ENCODE measurements at regions of chr5 and their contacts with region 1.

Region 1: DNA sequence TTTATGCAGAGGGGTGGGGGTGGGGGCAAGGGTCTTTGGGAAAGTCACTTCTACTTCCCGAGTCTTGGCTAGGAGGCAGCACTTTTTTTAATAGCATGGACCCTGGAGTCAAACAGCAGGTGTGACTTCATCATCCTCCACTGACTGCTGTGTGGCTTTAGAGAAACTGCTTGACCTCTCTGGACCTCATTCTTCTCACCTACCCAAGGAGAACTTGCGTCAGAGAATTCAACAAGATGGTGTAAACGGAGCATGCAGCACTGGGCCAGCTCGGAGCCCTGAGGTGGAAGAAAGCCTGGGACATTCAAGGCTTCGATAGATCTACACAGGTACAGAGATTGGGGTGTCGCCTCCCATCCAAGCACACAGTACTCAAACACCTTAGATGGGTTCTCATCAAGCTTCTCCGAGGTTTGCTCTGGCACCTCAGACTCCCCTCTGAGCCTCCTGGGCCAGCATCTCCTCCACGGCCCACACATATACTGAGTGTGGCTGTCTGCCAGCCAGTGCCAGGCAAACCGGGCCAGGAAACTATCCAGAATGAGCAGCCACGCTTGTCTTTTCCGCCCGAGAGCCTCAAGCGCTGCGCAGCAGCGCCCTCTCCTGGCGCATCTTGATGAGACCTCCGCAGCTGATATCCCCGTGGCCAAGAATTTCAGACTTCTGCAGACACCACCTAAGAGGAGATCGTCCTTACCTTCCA is 4.6 kb upstream of the SLC25A48 start:
- DNase-seq: peak; percentile 56 to 79
- ATAC-seq: peak; percentile 28 to 64; a peak in 4 of 6 replicates
- H3K4me3 ChIP-seq: no peak overlapping the region
- H3K27ac ChIP-seq: no peak overlapping the region
- H3K4me1 ChIP-seq: 0 out of 3 replicates have a peak, but pooled peaks cover under 1% of the 10 kb centered on the region
- CTCF ChIP-seq: peak; percentile 86
- EP300 ChIP-seq: no peak
- POLR2A ChIP-seq: no peak
- RAD21 ChIP-seq: peak; percentile 83

Region 2: DNA sequence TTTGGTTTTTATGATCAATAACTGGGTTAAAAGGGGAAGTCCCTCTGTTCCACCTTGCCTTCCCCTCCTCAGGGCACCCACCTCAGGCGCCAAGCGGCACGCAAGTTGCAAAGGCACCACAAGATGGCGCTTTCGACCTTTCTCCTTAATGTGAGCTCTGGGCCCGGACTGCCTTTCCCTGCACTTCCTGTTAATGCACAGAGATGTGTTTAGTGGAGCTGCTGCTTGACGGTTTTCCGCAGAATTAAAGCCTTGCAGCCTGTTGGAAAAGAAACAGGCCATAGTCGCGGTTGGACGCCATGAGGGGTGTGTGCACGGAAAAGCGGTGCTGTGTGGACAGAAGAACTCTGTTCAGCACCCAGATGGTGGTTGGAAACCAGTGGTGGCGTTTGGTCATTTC is 269.0 kb before region 1 on chr5:
- CTCF ChIA-PET with region 1: interaction called, 153 read pairs
- POLR2A ChIA-PET with region 1: no interaction called
- DNase-seq: peak; percentile 76 to 86
- ATAC-seq: peak; percentile 93 to 98
- H3K4me3 ChIP-seq: no peak overlapping the region
- H3K27ac ChIP-seq: no peak overlapping the region
- H3K4me1 ChIP-seq: no peaks in the 10 kb centered on the region
- CTCF ChIP-seq: peak; percentile 84
- EP300 ChIP-seq: no peak
- POLR2A ChIP-seq: no peak
- RAD21 ChIP-seq: peak; percentile 80 to 82

Region 3: GRCh38 chr5:135574493-135574892 is 255.3 kb before region 1 on chr5:
- CTCF ChIA-PET with region 1: interaction called, 11 read pairs
- POLR2A ChIA-PET with region 1: no interaction called
- DNase-seq: no peak
- ATAC-seq: no peak
- H3K4me3 ChIP-seq: no peak overlapping the region
- H3K27ac ChIP-seq: no peak overlapping the region
- H3K4me1 ChIP-seq: 0 out of 3 replicates have a peak, but pooled peaks cover 4% of the 10 kb centered on the region
- CTCF ChIP-seq: no peak
- EP300 ChIP-seq: no peak
- POLR2A ChIP-seq: no peak
- RAD21 ChIP-seq: no peak

Region 4: DNA sequence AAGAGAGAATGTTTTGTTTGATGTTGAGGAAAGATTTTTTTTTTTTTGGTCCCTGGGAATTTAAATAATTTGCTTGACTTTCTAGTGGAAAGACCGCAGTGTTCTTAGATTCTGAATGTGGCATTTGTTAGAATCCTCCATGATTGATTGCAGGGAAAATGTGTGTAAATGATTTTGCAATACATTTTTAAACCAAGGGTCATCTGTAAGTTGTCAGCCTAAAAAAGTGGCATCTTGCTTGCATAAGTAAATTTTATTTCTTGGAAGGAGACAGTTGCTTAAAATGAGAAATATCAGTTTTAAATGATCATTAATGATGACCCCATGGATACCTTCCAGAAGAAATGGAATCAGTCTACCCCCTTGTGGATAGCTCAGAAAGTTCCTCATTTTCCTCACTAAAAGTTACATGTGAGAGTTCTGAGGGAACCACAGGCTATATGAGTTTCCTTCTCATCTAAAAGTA is 100.5 kb before region 1 on chr5:
- CTCF ChIA-PET with region 1: interaction called, 13 read pairs
- POLR2A ChIA-PET with region 1: no interaction called
- DNase-seq: no peak
- ATAC-seq: peak in 1 of 2 experiments; percentile 62; a peak in 3 of 6 replicates
- H3K4me3 ChIP-seq: no peak overlapping the region
- H3K27ac ChIP-seq: no peak overlapping the region
- H3K4me1 ChIP-seq: no peaks in the 10 kb centered on the region
- CTCF ChIP-seq: peak; percentile 36; the same call in 2 of the 3 replicates
- EP300 ChIP-seq: no peak
- POLR2A ChIP-seq: no peak
- RAD21 ChIP-seq: peak; percentile 44 to 47; a peak in 4 of 5 replicates

Region 5: DNA sequence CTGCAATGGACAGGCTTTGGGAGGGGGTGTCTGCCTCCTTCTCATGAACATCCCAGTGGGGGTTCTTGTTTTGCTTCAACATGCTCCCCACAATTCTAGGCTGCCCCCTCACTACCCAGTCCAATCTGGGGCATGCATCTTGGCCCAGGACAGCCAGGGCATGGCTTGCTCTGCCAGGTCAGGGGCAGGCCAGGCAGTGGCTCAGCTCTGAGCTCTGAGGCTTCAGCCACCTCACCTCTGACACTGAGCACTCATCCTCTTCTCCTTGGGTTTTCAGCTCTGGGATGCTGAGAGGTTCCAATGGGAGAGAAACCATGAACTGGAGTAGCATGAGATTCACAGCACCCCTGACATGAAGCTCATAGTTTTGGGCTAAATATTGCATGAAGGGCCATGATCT is 16.5 kb after region 1 on chr5:
- CTCF ChIA-PET with region 1: interaction called, 12 read pairs
- POLR2A ChIA-PET with region 1: no interaction called
- DNase-seq: no peak
- ATAC-seq: no peak
- H3K4me3 ChIP-seq: no peak overlapping the region
- H3K27ac ChIP-seq: no peak overlapping the region
- H3K4me1 ChIP-seq: no peaks in the 10 kb centered on the region
- CTCF ChIP-seq: no peak
- EP300 ChIP-seq: no peak
- POLR2A ChIP-seq: no peak
- RAD21 ChIP-seq: no peak

Measured in A549 (cell line).